Mammary epithelial cell (primary cell): ENCODE measurements at regions of chr20 and their contacts with region 1.

Region 1: GRCh38 chr20:40481337-40481736 is 207.7 kb downstream of the MAFB start:
- DNase-seq: no peak
- H3K4me3 ChIP-seq: no peak overlapping the region
- H3K27ac ChIP-seq: no peak overlapping the region
- H3K4me1 ChIP-seq: no peaks in the 10 kb centered on the region
- H3K27me3 ChIP-seq: no peaks in the 10 kb centered on the region
- CTCF ChIP-seq: no peak

Region 2: DNA sequence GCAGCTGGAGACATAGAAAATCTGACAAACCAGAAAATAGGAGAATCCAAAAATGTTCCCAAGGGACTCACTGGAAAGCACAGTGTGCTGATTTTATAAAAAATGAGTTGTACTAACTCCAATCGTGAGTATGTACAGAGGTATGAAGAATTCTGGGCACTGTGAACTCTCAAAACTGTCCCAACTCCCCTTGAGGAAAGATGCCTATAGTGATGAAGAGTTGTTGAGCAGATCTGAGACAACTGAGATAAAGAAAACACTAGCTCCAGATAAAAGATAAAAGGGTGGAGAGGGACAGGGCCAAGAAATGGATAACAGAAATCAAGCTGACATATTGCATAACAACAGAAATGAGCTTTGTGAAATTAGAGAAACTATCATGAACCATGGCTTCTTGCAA is 273.7 kb before region 1 on chr20:
- CTCF ChIA-PET with region 1: no interaction called
- dilution Hi-C with region 1: no loop called
- in situ Hi-C with region 1: no loop called
- intact Hi-C with region 1: no loop called
- DNase-seq: no peak
- H3K4me3 ChIP-seq: no peak overlapping the region
- H3K27ac ChIP-seq: no peak overlapping the region
- H3K4me1 ChIP-seq: no peaks in the 10 kb centered on the region
- H3K27me3 ChIP-seq: peaks cover 2% of the 10 kb centered on the region
- CTCF ChIP-seq: no peak

Region 3: GRCh38 chr20:40414843-40415615 is 66.3 kb before region 1 on chr20:
- CTCF ChIA-PET with region 1: no interaction called
- dilution Hi-C with region 1: no loop called
- in situ Hi-C with region 1: no loop called
- intact Hi-C with region 1: no loop called
- DNase-seq: peak; percentile 79
- H3K4me3 ChIP-seq: no peak overlapping the region
- H3K27ac ChIP-seq: no peak overlapping the region
- H3K4me1 ChIP-seq: peaks cover 18% of the 10 kb centered on the region
- H3K27me3 ChIP-seq: no peaks in the 10 kb centered on the region
- CTCF ChIP-seq: no peak

Region 4: DNA sequence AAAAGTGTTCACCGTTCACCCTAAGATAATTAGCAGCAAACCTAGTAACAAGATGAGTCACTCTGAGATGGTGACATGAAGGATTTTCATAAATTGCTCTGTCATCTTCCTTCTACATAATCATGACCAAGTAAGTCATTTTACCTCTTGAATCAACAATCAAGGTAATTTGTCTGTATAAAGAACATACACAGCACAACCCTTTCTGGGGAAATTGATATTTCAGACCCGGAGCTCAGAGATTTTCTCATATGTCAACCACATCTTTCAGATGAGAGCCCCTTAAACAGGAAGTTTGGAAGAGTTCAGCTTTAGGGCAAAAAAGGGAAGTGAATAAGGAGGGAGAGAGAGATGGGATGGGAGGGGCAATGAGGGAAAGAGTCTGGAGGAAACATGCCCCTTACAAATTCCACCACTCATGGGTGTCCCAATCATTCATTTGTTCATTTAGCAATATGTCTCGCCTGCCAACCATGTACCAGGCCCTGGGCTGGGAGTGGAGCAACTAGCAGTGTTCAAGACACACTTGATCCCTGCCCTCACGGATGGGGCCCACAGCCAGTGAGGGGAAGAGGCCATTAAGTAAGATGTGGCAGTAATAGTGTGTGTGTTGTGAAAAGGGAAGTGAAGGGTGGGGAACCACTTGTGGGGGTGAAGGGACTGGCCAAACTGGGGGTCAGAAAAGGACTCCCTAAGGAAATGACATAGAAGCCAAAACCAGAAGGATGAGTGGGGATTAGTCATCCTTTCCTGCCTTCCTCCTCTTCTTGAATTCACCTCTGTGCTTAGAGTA is 16.8 kb after region 1 on chr20:
- CTCF ChIA-PET with region 1: no interaction called
- dilution Hi-C with region 1: no loop called
- in situ Hi-C with region 1: no loop called
- intact Hi-C with region 1: no loop called
- DNase-seq: peak; percentile 66
- H3K4me3 ChIP-seq: no peak overlapping the region
- H3K27ac ChIP-seq: peak overlapping the region; percentile 4
- H3K4me1 ChIP-seq: peaks cover 38% of the 10 kb centered on the region
- H3K27me3 ChIP-seq: no peaks in the 10 kb centered on the region
- CTCF ChIP-seq: no peak

Region 5: GRCh38 chr20:40547483-40548091 is 66.2 kb after region 1 on chr20:
- CTCF ChIA-PET with region 1: no interaction called
- dilution Hi-C with region 1: loop called (anchors 5 kb)
- in situ Hi-C with region 1: no loop called
- intact Hi-C with region 1: no loop called
- DNase-seq: no peak
- H3K4me3 ChIP-seq: no peak overlapping the region
- H3K27ac ChIP-seq: no peak overlapping the region
- H3K4me1 ChIP-seq: no peaks in the 10 kb centered on the region
- H3K27me3 ChIP-seq: no peaks in the 10 kb centered on the region
- CTCF ChIP-seq: no peak